Panc1 (cell line): ENCODE measurements at regions of chr5 and their contacts with region 1.

Region 1: DNA sequence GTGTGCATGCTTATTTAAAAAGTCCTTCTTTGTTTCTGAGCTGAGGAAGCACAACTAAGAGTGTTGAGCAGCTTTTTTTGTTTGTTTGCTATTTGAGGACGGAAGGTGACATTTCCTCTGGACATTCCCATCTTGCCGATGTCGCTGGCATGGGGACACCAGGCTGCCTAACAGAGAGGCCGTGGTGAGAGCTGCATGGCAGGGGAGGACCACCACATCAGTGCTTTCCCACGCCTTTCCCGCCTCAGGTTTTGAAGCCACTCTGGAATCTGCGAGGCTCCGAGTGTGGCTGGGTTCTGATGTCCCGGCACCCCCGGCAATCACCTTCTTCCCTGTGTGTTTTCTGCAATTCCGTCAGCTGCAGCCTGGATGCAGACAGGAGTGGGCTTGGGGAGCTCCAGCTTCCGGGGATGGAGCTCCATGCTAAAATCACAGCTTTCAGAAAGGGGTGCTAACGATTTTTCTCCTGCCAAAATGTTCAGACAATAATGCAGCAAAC is 259.8 kb upstream of the IRX4 start:
- DNase-seq: no peak
- ATAC-seq: no peak
- H3K4me3 ChIP-seq: peak overlapping the region in 1 of 2 experiments; percentile 6; a peak in 1 of 4 replicates
- H3K27ac ChIP-seq: no peak overlapping the region
- H3K4me1 ChIP-seq: no peaks in the 10 kb centered on the region
- H3K27me3 ChIP-seq: peaks cover 2% of the 10 kb centered on the region; the same call in 1 of the 2 replicates
- CTCF ChIP-seq: no peak

Region 2: GRCh38 chr5:2223303-2223702 is 80.8 kb after region 1 on chr5:
- CTCF ChIA-PET with region 1: no interaction called
- POLR2A ChIA-PET with region 1: no interaction called
- in situ Hi-C with region 1: no loop called
- intact Hi-C with region 1: no loop called
- DNase-seq: no peak
- ATAC-seq: no peak
- H3K4me3 ChIP-seq: no peak overlapping the region
- H3K27ac ChIP-seq: no peak overlapping the region
- H3K4me1 ChIP-seq: no peaks in the 10 kb centered on the region
- H3K27me3 ChIP-seq: peaks cover 2% of the 10 kb centered on the region; the same call in 1 of the 2 replicates
- CTCF ChIP-seq: no peak

Region 3: DNA sequence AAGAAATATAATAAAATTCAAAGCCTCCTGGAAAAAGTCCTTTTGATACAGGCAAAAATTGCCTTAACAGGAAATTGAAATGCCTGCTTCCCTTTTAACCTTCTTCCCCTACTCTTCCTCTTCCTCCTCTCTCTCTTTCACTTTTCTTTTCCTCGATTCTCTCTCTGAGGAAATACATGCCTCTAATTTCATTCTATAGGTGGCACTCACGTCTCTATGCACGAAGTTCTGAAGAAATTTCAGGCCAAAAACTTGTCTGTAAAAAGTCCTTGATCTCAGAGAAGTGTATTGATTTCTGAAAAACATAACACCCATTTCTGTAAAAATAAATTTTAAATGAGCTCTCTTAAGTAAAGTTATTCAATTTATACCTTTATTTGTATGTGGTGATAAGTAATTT is 111.9 kb after region 1 on chr5:
- CTCF ChIA-PET with region 1: no interaction called
- POLR2A ChIA-PET with region 1: no interaction called
- in situ Hi-C with region 1: no loop called
- intact Hi-C with region 1: no loop called
- DNase-seq: no peak
- ATAC-seq: no peak
- H3K4me3 ChIP-seq: no peak overlapping the region
- H3K27ac ChIP-seq: no peak overlapping the region
- H3K4me1 ChIP-seq: no peaks in the 10 kb centered on the region
- H3K27me3 ChIP-seq: no peaks in the 10 kb centered on the region; the same call in 1 of the 2 replicates
- CTCF ChIP-seq: no peak

Region 4: GRCh38 chr5:2496126-2496525 is 353.6 kb after region 1 on chr5:
- CTCF ChIA-PET with region 1: no interaction called
- POLR2A ChIA-PET with region 1: no interaction called
- in situ Hi-C with region 1: no loop called
- intact Hi-C with region 1: no loop called
- DNase-seq: no peak
- ATAC-seq: no peak
- H3K4me3 ChIP-seq: no peak overlapping the region
- H3K27ac ChIP-seq: no peak overlapping the region
- H3K4me1 ChIP-seq: no peaks in the 10 kb centered on the region
- H3K27me3 ChIP-seq: no peaks in the 10 kb centered on the region
- CTCF ChIP-seq: no peak

Region 5: GRCh38 chr5:4042311-4042710 is 1899.8 kb after region 1 on chr5:
- CTCF ChIA-PET with region 1: no interaction called
- POLR2A ChIA-PET with region 1: interaction called, 12 read pairs
- in situ Hi-C with region 1: no loop called
- intact Hi-C with region 1: no loop called
- DNase-seq: no peak
- ATAC-seq: no peak
- H3K4me3 ChIP-seq: no peak overlapping the region
- H3K27ac ChIP-seq: no peak overlapping the region
- H3K4me1 ChIP-seq: no peaks in the 10 kb centered on the region
- H3K27me3 ChIP-seq: no peaks in the 10 kb centered on the region
- CTCF ChIP-seq: no peak